ENCODE measurements at regions of chr4 and their contacts with region 1.

Region 1: DNA sequence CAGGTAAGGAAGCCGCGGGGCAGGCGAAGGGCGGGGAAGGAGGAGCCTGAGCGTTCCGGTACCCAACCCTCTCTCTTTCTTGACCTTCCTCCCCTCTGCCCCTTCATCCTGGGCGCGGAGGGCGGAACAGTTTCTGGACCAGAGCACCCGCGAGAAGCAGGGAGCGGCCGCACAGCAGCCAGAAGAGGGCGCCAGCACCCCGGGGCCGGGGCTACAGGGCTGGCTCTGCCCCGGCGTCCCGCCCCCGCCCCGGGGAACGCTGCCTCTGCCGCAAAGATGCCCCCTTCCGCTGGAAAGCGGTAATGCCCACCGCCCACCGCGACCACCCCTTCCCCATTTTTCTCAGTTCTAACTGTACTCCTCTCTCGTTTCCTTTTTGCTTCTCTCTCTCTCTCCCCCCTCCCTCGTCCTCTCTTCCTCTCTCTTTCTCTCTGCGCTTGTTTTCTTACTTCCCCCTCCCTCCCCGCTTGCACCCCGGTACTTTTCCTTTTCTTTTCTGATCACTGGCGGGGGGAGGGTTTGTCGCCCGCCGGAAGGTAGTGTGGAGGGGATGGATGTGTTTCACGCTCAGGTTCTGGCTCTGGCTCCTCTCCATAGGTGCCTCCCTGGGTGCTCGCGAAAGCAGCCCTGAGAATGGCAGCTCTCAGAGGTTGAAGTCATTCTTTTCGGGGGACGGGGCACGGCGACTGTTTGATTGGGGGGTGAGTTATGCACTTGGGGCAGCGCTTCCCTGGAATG is 13.1 kb upstream of the PRDM8 start:
- DNase-seq: peak; percentile 94
- ATAC-seq: peak; percentile 94
- H3K4me3 Mint-ChIP-seq: peak overlapping the region; percentile 98
- H3K27ac Mint-ChIP-seq: peak overlapping the region; percentile 98
- H3K4me1 Mint-ChIP-seq: peaks cover 41% of the 10 kb centered on the region
- H3K27me3 Mint-ChIP-seq: peaks cover 25% of the 10 kb centered on the region

Region 2: GRCh38 chr4:79798047-79798446 is 386.2 kb before region 1 on chr4:
- CTCF ChIA-PET with region 1: no interaction called
- POLR2A ChIA-PET with region 1: no interaction called
- DNase-seq: no peak
- ATAC-seq: no peak
- H3K4me3 Mint-ChIP-seq: no peak overlapping the region
- H3K27ac Mint-ChIP-seq: no peak overlapping the region
- H3K4me1 Mint-ChIP-seq: no peaks in the 10 kb centered on the region
- H3K27me3 Mint-ChIP-seq: no peaks in the 10 kb centered on the region

Region 3: GRCh38 chr4:80072744-80073472 is 111.3 kb before region 1 on chr4 and contains the start of gene ANTXR2:
- CTCF ChIA-PET with region 1: interaction called, 4 read pairs
- POLR2A ChIA-PET with region 1: interaction called, 11 read pairs
- DNase-seq: peak; percentile 75
- ATAC-seq: peak; percentile 89
- H3K4me3 Mint-ChIP-seq: peak within 1 kb of the TSS; percentile 95
- H3K27ac Mint-ChIP-seq: peak within 1 kb of the TSS; percentile 88
- H3K4me1 Mint-ChIP-seq: peaks cover 59% of the 10 kb centered on the region
- H3K27me3 Mint-ChIP-seq: peaks cover 2% of the 10 kb centered on the region
- total RNA-seq, gene ANTXR2: 15.0 to 18.0 TPM

Region 4: GRCh38 chr4:80125252-80126177 is 58.7 kb before region 1 on chr4:
- CTCF ChIA-PET with region 1: interaction called, 239 read pairs
- POLR2A ChIA-PET with region 1: interaction called, 45 read pairs
- DNase-seq: peak; percentile 68
- ATAC-seq: peak; percentile 89
- H3K4me3 Mint-ChIP-seq: peak overlapping the region; percentile 48
- H3K27ac Mint-ChIP-seq: peak overlapping the region; percentile 83
- H3K4me1 Mint-ChIP-seq: peaks cover 58% of the 10 kb centered on the region
- H3K27me3 Mint-ChIP-seq: no peaks in the 10 kb centered on the region

Region 5: DNA sequence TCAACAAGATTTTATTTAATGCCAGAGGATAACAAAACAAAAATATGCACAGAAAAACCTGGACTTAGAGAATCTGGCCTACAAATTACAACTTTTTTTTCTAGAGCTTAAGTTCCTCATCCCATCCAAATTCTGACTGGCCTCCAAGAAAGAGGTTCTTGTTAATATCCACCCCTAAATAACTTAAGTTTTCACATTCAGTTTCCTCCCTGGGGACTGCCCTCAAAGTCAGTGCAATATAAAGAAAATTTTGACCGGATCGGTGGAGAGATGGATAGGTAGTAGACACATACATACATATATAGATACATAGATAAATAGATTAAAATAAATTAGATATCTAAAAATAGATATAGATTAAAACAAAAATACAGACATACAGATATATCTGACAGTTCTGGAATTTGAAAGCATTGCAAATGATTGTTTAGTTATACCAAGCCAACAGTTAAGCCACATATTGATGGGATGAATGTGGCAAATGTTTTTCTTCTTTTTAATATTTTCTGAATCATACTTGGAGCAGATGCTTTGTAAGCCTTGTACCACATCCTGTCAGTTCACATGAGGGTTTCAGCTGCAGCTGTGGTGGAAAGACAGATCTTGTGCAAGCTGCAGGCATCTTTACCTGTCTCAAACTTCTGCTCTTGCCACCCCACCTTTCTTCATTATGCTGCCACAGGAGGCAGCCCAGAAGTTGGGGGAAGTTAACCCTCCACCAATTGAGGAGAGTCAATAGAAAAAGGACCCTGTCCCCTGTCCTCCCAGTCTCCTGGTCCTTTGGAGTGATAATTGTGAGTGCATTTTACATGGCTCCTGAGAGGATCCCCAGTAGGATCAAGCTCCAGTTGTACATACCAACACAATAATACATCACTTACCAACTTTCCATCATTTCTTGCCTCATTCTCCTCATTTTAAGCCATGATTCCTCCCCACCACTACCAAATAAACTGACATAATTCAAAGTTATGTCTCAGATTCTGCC is 45.4 kb before region 1 on chr4:
- CTCF ChIA-PET with region 1: interaction called, 64 read pairs
- POLR2A ChIA-PET with region 1: interaction called, 11 read pairs
- DNase-seq: peak; percentile 78
- ATAC-seq: peak; percentile 95
- H3K4me3 Mint-ChIP-seq: peak overlapping the region; percentile 6
- H3K27ac Mint-ChIP-seq: peak overlapping the region; percentile 81
- H3K4me1 Mint-ChIP-seq: peaks cover 52% of the 10 kb centered on the region
- H3K27me3 Mint-ChIP-seq: no peaks in the 10 kb centered on the region

Region 6: GRCh38 chr4:80173401-80173800 is 10.8 kb before region 1 on chr4:
- CTCF ChIA-PET with region 1: interaction called, 90 read pairs
- POLR2A ChIA-PET with region 1: interaction called, 34 read pairs
- DNase-seq: peak; percentile 73
- ATAC-seq: peak; percentile 94
- H3K4me3 Mint-ChIP-seq: peak overlapping the region; percentile 56
- H3K27ac Mint-ChIP-seq: peak overlapping the region; percentile 85
- H3K4me1 Mint-ChIP-seq: peaks cover 50% of the 10 kb centered on the region
- H3K27me3 Mint-ChIP-seq: no peaks in the 10 kb centered on the region

Region 7: GRCh38 chr4:80202190-80202711 is 18.0 kb after region 1 on chr4:
- CTCF ChIA-PET with region 1: interaction called, 79 read pairs
- POLR2A ChIA-PET with region 1: interaction called, 17 read pairs
- DNase-seq: peak; percentile 78
- ATAC-seq: peak; percentile 77
- H3K4me3 Mint-ChIP-seq: peak overlapping the region; percentile 71
- H3K27ac Mint-ChIP-seq: peak overlapping the region; percentile 54
- H3K4me1 Mint-ChIP-seq: peaks cover 24% of the 10 kb centered on the region
- H3K27me3 Mint-ChIP-seq: peaks cover 29% of the 10 kb centered on the region

Region 8: GRCh38 chr4:80215449-80216052 is 31.3 kb after region 1 on chr4:
- CTCF ChIA-PET with region 1: interaction called, 13 read pairs
- POLR2A ChIA-PET with region 1: no interaction called
- DNase-seq: no peak
- ATAC-seq: no peak
- H3K4me3 Mint-ChIP-seq: no peak overlapping the region
- H3K27ac Mint-ChIP-seq: no peak overlapping the region
- H3K4me1 Mint-ChIP-seq: peaks cover 1% of the 10 kb centered on the region
- H3K27me3 Mint-ChIP-seq: peaks cover 37% of the 10 kb centered on the region